ENCODE measurements at regions of chr1 and their contacts with region 1.

Region 1: GRCh38 chr1:201877877-201878401 is 10.8 kb upstream of the SHISA4 start:
- DNase-seq: peak in 2 of 9 experiments; percentile 34 to 47
- ATAC-seq: peak; percentile 42
- H3K4me3 ChIP-seq: no peak overlapping the region
- H3K4me3 Mint-ChIP-seq: no peak overlapping the region
- H3K27ac ChIP-seq: no peak overlapping the region
- H3K27ac Mint-ChIP-seq: peak overlapping the region; percentile 18
- H3K4me1 ChIP-seq: no peaks in the 10 kb centered on the region
- H3K4me1 Mint-ChIP-seq: no peaks in the 10 kb centered on the region
- H3K27me3 ChIP-seq: no peaks in the 10 kb centered on the region
- H3K27me3 Mint-ChIP-seq: no peaks in the 10 kb centered on the region
- CTCF ChIP-seq: peak; percentile 44

Region 2: DNA sequence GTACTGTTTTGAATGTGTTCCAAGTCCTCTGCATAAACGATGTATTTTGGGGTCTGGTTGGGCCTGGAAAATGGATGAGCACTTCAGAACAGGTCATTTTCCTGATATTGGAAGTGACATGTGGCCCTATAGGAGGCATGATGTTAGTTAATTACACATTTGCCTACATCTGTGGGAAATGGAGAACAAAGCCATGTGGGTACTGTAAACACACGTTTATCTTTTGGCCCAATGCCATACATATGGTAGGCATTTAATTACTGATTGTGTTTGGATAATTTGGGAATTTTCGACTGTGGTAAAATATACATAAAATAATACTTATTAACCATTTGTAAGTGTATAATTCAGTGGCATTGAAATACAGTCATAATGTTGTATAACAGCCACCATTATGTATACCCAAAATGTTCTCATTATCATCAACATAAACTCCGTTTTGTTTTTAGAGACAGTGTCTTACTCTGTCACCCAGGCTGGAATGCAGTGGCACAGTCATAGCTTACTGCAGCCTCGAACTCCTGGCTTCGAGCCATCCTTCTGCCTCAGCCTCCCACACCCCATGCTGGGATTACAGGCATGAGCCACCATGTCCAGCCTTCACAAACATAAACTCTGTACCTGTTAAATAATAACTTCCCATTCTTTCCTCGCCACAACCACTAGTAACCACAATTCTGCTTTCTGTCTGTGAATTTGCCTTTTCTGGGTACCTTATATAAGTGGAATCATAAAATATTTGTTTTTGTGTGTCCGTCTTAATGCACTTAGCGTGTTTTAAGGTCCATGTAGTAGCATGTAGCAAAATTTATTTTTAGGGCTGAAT is 92.6 kb after region 1 on chr1:
- CTCF ChIA-PET with region 1: interaction called, 3 read pairs
- POLR2A ChIA-PET with region 1: no interaction called
- intact Hi-C with region 1: loop called (anchors 1 to 5 kb)
- DNase-seq: no peak
- ATAC-seq: no peak
- H3K4me3 ChIP-seq: no peak overlapping the region
- H3K4me3 Mint-ChIP-seq: no peak overlapping the region
- H3K27ac ChIP-seq: no peak overlapping the region
- H3K27ac Mint-ChIP-seq: no peak overlapping the region
- H3K4me1 ChIP-seq: no peaks in the 10 kb centered on the region
- H3K4me1 Mint-ChIP-seq: peaks cover 4% of the 10 kb centered on the region
- H3K27me3 ChIP-seq: no peaks in the 10 kb centered on the region
- H3K27me3 Mint-ChIP-seq: no peaks in the 10 kb centered on the region
- CTCF ChIP-seq: no peak

Measured in CD8-positive, alpha-beta T cell (primary cell).